ENCODE measurements at regions of chr10 and their contacts with region 1.

Region 1: DNA sequence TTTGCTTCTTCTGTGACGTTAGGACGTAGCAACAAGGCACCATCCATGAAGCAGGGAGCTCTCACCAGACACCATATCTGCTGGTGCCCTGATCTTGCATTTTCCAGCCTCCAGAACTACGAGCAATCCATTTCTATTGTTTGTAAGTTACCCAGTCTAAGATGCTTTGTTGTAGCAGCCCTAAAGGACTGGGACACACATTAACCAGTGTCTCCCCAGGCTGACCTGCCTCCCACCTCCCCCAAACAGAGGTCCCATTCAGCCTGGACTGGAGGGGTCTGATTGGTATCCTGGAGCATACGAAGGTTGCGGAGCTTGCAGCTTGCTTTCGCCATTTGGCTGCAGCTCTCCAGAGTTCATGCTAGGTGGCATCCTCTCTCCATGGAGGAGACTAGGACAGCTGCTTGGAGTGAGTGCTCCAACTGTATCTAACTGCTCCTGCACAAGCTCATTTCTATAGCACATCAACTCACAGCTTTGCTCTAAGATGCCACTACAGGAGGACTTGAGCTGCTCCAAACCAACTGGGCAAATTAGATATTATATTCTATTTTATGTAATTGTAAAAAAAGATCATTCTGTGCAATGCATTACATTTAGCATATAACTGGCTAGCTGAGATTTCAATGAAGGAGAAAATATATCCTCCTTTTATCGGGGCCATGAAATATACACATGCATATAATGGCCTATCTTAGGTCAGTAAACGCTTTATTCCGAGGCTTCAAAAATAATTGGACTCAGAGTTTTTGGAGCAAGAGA is 8.0 kb upstream of the GRK5 start:
- DNase-seq: no peak
- H3K4me3 ChIP-seq: no peak overlapping the region
- H3K27me3 ChIP-seq: no peaks in the 10 kb centered on the region
- CTCF ChIP-seq: peak; percentile 79

Region 2: GRCh38 chr10:119022846-119023552 is 176.4 kb before region 1 on chr10:
- CTCF ChIA-PET with region 1: no interaction called
- POLR2A ChIA-PET with region 1: no interaction called
- DNase-seq: peak; percentile 74
- H3K4me3 ChIP-seq: no peak overlapping the region
- H3K27me3 ChIP-seq: peaks cover 3% of the 10 kb centered on the region
- CTCF ChIP-seq: no peak

Region 3: DNA sequence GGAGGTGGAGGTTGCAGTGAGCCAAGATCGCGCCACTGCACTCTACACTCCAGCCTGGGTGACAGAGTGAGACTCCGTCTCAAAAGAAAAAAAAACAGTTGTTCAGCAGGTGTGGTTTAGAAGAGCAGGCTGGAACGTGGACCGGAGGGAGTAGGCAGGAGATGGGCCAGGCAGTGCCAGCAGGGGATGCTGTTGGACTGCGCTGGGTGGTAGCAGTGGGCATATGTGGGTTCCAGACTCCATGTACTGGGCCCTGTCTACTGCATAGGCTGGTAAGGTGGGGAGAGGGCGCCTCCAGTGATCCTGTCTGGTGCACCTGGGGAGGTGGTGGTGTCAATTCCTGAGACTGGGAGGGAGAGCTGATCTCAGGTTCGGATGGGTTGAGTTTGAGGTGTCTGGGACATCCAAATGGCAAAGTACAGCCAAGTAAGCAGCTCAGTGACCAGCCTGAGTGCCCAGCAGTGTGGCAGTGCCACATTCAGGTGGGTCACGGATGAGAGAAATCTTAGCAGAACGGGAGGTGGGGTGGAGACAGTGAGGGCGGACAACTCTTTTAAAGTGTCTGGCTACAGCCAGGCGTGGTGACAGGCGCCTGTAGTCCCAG is 59.8 kb before region 1 on chr10:
- CTCF ChIA-PET with region 1: interaction called, 14 read pairs
- POLR2A ChIA-PET with region 1: no interaction called
- DNase-seq: no peak
- H3K4me3 ChIP-seq: no peak overlapping the region
- H3K27me3 ChIP-seq: no peaks in the 10 kb centered on the region
- CTCF ChIP-seq: peak; percentile 72

Region 4: GRCh38 chr10:119416855-119417254 is 217.4 kb after region 1 on chr10:
- CTCF ChIA-PET with region 1: interaction called, 20 read pairs
- POLR2A ChIA-PET with region 1: no interaction called
- DNase-seq: no peak
- H3K4me3 ChIP-seq: no peak overlapping the region
- H3K27me3 ChIP-seq: no peaks in the 10 kb centered on the region
- CTCF ChIP-seq: peak; percentile 67

Region 5: DNA sequence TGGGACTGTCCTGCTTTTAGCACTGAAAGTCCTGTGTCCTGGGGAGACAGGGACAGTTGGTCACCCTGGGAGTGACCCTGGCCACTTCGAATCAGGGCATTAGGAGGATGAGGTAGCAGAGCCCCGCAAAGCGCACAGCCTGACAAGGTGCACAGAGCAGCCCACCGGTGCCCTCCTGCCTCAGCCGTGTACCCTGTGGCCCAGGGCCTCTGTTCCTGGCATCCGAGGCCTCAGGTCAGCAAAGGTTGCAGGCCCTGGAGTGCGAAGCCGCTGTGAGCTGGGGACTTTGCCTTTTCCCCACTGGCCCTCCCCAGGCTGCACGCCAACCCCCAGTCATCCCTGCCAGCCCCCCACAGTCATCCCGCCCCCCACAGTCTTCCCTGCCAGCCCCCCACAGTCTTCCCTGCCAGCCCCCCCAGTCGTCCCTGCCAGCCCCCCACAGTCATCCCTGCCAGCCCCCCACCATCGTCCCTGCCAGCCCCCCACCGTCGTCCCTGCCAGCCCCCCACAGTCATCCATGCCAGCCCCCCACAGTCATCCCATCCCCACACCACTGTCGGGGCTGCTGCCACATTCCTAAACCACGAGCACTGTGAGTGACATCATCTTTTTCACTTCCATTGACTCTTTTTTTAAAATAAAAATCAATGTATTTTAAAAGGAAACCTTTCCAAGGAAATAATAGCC is 251.3 kb after region 1 on chr10:
- CTCF ChIA-PET with region 1: interaction called, 143 read pairs
- POLR2A ChIA-PET with region 1: no interaction called
- DNase-seq: no peak
- H3K4me3 ChIP-seq: no peak overlapping the region
- H3K27me3 ChIP-seq: no peaks in the 10 kb centered on the region
- CTCF ChIP-seq: no peak

Region 6: DNA sequence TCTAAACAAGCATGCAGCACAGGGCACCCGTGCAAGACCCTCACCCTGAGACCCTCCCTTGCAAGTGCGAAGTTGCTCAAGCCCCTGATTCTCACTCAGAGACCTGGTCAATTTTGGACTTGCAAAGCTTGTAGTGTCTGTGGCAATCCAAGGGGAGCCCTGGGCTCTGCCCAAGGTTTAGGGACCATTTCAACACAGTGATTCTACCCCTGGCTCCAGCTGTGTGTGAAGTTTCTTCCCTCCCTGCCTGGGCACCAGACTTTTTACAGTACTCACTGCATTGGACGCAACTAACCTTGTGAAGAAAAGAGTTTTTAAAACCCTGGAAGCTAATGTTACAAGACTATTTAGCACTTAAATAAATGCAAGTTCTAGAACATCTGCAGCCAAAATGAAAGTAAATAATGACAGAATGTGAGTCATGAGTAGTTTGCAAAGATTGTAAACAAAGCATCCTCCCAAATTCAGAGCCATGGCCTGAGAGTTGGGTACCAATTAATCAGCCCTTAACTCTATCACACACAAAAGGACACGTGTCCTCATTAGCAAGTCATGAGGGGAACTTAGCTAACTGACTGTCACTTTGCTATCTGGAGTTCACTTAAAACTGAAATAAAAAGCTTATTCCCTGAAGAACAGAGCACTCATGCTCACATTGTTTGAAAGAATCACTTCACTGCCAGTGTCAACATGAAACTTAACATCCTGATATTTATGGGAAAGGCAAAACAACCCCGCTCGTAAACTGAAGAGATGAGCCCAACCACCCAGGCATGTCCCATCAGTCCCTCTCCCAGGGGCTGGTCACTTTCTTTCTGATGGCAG is 295.0 kb after region 1 on chr10:
- CTCF ChIA-PET with region 1: interaction called, 50 read pairs
- POLR2A ChIA-PET with region 1: no interaction called
- DNase-seq: no peak
- H3K4me3 ChIP-seq: no peak overlapping the region
- H3K27me3 ChIP-seq: no peaks in the 10 kb centered on the region
- CTCF ChIP-seq: no peak

Region 7: DNA sequence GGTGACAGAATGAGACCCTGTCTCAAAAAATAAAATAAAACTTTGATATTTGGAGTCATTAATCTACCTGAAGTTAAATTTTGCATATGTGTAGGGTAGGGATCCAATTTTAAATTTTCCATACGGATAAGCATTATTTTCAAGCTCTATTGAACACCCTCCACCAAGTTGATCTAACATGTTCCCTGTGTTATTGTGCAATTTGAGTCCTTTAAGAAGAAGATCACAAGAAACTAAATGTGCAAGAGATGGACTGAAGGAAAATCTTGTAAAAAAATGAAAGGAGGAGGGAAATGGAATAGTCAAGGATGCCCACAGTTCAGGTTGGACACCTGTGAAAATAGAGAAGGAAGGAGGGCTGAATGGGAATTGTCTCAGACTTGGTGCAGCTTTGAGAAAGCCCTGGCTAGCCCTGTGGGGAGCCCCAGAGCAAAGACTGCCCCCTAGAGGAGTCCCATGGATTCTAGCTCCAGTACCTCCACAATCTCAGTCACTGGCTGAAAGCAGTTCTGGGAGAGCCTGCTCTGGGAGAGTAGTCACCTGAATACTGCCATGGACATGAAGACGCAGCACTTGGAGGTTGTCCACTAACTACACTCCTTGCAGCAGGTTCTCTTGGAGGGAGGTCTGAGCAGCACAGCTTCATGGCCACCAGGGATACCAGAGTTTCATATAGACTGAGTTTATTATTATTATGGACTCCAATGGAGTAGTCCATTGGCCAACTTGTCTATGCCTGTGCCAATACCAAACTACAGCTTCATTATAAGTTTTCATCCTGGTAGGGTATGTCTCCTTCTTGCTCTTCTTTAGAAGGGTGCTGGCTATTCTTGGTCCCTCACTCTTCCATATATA is 403.1 kb after region 1 on chr10:
- CTCF ChIA-PET with region 1: interaction called, 20 read pairs
- POLR2A ChIA-PET with region 1: no interaction called
- DNase-seq: no peak
- H3K4me3 ChIP-seq: no peak overlapping the region
- H3K27me3 ChIP-seq: no peaks in the 10 kb centered on the region
- CTCF ChIP-seq: peak; percentile 69